Heart left ventricle (tissue), 16 donors: ENCODE measurements at regions of chr5 and their contacts with region 1.

Region 1: GRCh38 chr5:173853370-173854131 is 34.6 kb upstream of the CPEB4 start:
- DNase-seq: no peak
- ATAC-seq: peak; percentile 65 to 91 (median 88)
- H3K4me3 ChIP-seq: no peak overlapping the region
- H3K27ac ChIP-seq: peak overlapping the region in 3 of 12 donors; percentile 21 to 39 (median 24)
- H3K4me1 ChIP-seq: peaks cover 0 to 6% (median 4%) of the 10 kb centered on the region in 12 donors
- H3K27me3 ChIP-seq: no peaks in the 10 kb centered on the region
- CTCF ChIP-seq: no peak
- POLR2A ChIP-seq: no peak

Region 2: DNA sequence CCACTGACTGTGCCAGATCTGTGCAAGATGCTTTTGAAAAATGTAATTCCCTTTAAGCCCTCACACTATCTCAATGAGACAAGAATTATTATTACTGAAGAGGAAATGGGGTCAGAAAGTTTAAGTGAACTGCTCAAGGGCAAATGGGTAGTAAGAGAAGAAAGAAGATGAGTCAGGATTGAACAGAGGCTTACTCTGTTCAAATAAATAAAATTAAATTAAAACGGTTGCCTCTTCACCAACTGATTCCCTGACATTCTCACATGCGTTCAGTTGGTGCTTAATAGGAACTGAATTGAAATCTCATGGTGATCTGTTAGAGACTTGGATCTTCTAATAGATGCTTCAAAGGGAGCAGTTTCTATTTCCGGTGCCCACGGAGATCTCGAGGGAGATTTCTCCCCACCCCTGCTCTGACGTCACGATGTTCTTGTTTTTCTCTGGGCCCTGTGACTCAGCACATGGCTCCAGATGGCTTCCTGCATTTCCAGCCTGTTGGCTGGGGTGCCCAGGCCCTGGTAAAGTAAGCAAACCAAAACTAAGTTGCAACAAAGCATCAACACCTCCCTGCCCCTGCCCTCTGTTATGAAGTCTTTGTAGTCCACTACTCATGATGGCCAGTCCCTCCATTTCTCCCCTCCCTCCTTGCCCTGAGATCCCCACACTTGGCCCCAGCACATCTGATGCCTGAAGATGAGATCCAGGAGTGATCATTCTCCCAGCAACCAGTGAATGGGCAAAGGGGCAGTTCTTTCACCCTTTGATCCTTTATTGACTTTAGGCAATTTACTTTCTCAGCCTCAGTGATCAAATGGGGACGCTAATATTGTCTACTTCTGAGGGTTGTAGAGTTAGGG is 71.5 kb before region 1 on chr5:
- intact Hi-C with region 1: loop called in 2 of 10 experiments (anchors 5 kb)
- DNase-seq: peak in 4 of 5 donors; percentile 70 to 90 (median 80)
- ATAC-seq: peak in 3 of 4 donors; percentile 85 to 89 (median 88)
- H3K4me3 ChIP-seq: no peak overlapping the region
- H3K27ac ChIP-seq: peak overlapping the region in 11 of 12 donors; percentile 3 to 79 (median 53)
- H3K4me1 ChIP-seq: peaks cover 0 to 58% (median 9%) of the 10 kb centered on the region in 12 donors
- H3K27me3 ChIP-seq: no peaks in the 10 kb centered on the region
- CTCF ChIP-seq: no peak
- POLR2A ChIP-seq: no peak